Heart left ventricle (tissue), 16 donors: ENCODE measurements at regions of chr17 and their contacts with region 1.

Region 1: DNA sequence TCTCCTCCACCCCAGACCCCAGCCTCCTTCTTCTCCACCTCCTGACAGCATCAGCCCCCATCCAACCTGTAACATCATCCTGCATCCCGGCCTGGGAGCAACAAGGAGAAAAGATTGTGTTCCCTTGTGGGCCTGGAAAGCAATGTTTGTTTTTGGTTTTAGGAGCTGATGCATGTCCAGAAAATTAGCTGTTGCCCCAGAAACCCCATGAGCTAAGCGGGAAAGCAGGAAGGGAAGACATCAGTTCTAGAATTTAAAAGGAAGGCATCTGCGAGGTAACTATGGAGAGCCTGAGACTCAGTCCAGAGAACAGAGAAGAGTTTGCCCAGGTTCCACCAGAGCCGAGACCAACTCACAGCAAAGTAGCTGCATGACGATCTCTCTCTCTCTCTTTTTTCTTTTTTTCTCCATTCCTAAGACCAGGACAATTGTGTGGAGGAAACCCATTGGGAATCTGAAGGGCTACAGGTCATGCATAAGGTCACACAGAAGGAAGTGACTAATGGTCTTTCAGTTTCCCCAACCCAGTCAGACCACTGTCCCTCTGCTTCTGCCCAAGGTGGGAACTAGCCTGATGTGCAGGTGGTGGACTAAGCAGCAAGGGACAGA is 124.4 kb downstream of the SLC39A11 start:
- DNase-seq: no peak
- ATAC-seq: no peak
- H3K4me3 ChIP-seq: no peak overlapping the region
- H3K27ac ChIP-seq: no peak overlapping the region
- H3K4me1 ChIP-seq: peaks cover 0 to 11% (median 0%) of the 10 kb centered on the region in 12 donors
- H3K27me3 ChIP-seq: no peaks in the 10 kb centered on the region
- CTCF ChIP-seq: no peak
- POLR2A ChIP-seq: no peak

Region 2: DNA sequence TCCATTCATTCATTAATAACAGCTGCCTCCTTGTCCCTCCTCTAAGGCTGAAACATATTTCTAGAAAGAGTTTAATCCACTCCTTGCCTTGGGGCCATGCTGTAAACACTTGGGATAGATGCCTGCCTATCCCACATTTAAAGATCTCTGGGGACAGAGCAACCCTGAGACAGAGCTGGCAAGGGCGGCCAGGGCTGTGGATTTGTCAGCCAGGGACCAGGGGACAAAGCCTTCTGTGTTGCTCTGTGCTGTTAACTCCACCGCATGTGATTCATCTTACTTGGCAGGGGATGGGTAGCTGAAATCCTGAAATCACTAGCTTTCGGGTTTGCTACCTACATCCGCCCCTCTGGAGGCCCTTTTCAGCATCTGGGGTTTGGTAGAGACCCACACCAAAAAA is 268.5 kb before region 1 on chr17:
- intact Hi-C with region 1: no loop called
- DNase-seq: peak in 1 of 5 donors; percentile 29
- ATAC-seq: peak in 2 of 4 donors; percentile 70 to 71
- H3K4me3 ChIP-seq: no peak overlapping the region
- H3K27ac ChIP-seq: no peak overlapping the region
- H3K4me1 ChIP-seq: no peaks in the 10 kb centered on the region
- H3K27me3 ChIP-seq: no peaks in the 10 kb centered on the region
- CTCF ChIP-seq: no peak
- POLR2A ChIP-seq: no peak

Region 3: GRCh38 chr17:73028299-73028755 is 60.2 kb after region 1 on chr17:
- intact Hi-C with region 1: loop called in 1 of 10 experiments (anchors 10 kb)
- DNase-seq: no peak
- ATAC-seq: peak in 3 of 4 donors; percentile 32 to 85 (median 73)
- H3K4me3 ChIP-seq: no peak overlapping the region
- H3K27ac ChIP-seq: peak overlapping the region in 2 of 12 donors; percentile 13 to 17
- H3K4me1 ChIP-seq: peaks cover 0 to 31% (median 0%) of the 10 kb centered on the region in 12 donors
- H3K27me3 ChIP-seq: no peaks in the 10 kb centered on the region
- CTCF ChIP-seq: no peak
- POLR2A ChIP-seq: no peak